Activated CD8-positive, alpha-beta T cell treated with anti-CD3 and anti-CD28 coated beads, Interleukin-2, amount 10 ng/mL, durations not matched to agents 7 days and 5 days (primary cell): ENCODE measurements at regions of chr17 and their contacts with region 1.

Region 1: DNA sequence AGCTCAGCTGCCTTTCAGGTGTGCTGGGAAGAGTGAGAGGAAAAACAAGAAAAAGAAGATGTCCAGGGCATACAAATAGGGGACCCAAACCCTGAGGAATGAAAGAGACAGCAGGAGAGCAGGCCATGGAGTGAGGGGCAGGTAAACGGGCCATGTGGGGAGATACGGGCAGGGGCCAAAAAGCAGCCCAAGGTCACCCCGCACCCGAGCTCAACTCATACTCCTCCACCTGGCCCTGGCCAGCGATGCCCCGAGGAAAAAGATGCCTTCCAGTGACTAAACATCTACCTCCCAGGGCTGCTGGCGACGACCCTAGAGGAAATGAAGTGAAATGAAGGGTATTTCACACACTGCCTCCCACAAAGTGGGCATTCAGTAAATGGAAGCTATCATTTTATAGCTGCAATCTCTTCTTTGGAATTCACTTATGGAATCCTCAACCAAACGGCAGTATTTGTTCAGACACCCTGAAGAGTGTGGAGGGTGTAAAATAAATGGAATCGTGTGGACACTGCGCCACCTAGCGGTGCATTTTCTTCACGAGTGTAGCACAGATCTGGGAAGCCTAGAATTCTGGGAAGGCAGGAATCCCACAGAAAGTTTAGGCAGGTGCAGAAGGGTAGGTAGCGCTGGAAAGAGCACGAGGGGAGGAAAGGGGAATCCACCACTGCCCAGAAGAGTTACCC is 14.9 kb downstream of the ELAC2 start:
- DNase-seq: peak; percentile 53
- ATAC-seq: peak; percentile 55
- H3K4me3 Mint-ChIP-seq: no peak overlapping the region
- H3K27ac Mint-ChIP-seq: no peak overlapping the region
- H3K4me1 Mint-ChIP-seq: peaks cover 1% of the 10 kb centered on the region
- H3K27me3 Mint-ChIP-seq: no peaks in the 10 kb centered on the region

Region 2: GRCh38 chr17:13017659-13018459 is 14.9 kb after region 1 on chr17 and contains the start of gene ELAC2:
- CTCF ChIA-PET with region 1: interaction called, 36 read pairs
- POLR2A ChIA-PET with region 1: interaction called, 3 read pairs
- DNase-seq: peak; percentile 96
- ATAC-seq: peak; percentile 100
- H3K4me3 Mint-ChIP-seq: peak within 1 kb of the TSS; percentile 98
- H3K27ac Mint-ChIP-seq: peak within 1 kb of the TSS; percentile 93
- H3K4me1 Mint-ChIP-seq: peaks cover 25% of the 10 kb centered on the region
- H3K27me3 Mint-ChIP-seq: no peaks in the 10 kb centered on the region
- total RNA-seq, gene ELAC2: 62.6 to 70.2 TPM

Region 3: GRCh38 chr17:13044572-13045065 is 41.7 kb after region 1 on chr17:
- CTCF ChIA-PET with region 1: no interaction called
- POLR2A ChIA-PET with region 1: no interaction called
- DNase-seq: no peak
- ATAC-seq: no peak
- H3K4me3 Mint-ChIP-seq: no peak overlapping the region
- H3K27ac Mint-ChIP-seq: no peak overlapping the region
- H3K4me1 Mint-ChIP-seq: no peaks in the 10 kb centered on the region
- H3K27me3 Mint-ChIP-seq: no peaks in the 10 kb centered on the region

Region 4: GRCh38 chr17:13067629-13068303 is 64.9 kb after region 1 on chr17:
- CTCF ChIA-PET with region 1: no interaction called
- POLR2A ChIA-PET with region 1: no interaction called
- DNase-seq: no peak
- ATAC-seq: no peak
- H3K4me3 Mint-ChIP-seq: no peak overlapping the region
- H3K27ac Mint-ChIP-seq: no peak overlapping the region
- H3K4me1 Mint-ChIP-seq: no peaks in the 10 kb centered on the region
- H3K27me3 Mint-ChIP-seq: peaks cover 3% of the 10 kb centered on the region